Vagina (tissue), 2 donors: ENCODE measurements at regions of chr14 and their contacts with region 1.

Region 1: GRCh38 chr14:27270716-27271115 is 672.9 kb upstream of the NOVA1 start:
- DNase-seq: no peak
- H3K4me3 ChIP-seq: no peak overlapping the region
- H3K27ac ChIP-seq: no peak overlapping the region
- H3K4me1 ChIP-seq: no peaks in the 10 kb centered on the region
- H3K27me3 ChIP-seq: no peaks in the 10 kb centered on the region
- CTCF ChIP-seq: no peak
- POLR2A ChIP-seq: no peak

Region 2: DNA sequence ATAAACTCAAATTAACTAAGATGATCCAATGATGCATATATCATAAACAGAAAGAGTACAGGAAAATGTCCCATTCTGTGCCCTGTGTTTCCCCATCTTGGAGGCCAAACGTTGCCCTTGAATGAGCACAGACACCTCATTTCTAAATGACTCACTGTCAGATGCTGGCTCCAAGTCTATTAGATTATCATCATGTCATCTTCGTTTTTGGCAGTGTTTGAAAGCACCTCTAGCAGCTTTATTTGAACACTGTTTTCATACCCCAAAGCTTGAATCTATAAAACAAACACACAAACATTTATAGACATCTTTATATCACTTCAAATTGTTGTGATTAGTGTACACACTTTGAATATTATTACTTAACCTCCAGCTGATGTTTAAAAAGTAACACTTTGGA is 1097.1 kb before region 1 on chr14:
- intact Hi-C with region 1: loop called (anchors 10 kb)
- DNase-seq: no peak
- H3K4me3 ChIP-seq: no peak overlapping the region
- H3K27ac ChIP-seq: no peak overlapping the region
- H3K4me1 ChIP-seq: no peaks in the 10 kb centered on the region
- H3K27me3 ChIP-seq: no peaks in the 10 kb centered on the region
- CTCF ChIP-seq: no peak
- POLR2A ChIP-seq: no peak